ENCODE measurements at regions of chrX and their contacts with region 1.

Region 1: DNA sequence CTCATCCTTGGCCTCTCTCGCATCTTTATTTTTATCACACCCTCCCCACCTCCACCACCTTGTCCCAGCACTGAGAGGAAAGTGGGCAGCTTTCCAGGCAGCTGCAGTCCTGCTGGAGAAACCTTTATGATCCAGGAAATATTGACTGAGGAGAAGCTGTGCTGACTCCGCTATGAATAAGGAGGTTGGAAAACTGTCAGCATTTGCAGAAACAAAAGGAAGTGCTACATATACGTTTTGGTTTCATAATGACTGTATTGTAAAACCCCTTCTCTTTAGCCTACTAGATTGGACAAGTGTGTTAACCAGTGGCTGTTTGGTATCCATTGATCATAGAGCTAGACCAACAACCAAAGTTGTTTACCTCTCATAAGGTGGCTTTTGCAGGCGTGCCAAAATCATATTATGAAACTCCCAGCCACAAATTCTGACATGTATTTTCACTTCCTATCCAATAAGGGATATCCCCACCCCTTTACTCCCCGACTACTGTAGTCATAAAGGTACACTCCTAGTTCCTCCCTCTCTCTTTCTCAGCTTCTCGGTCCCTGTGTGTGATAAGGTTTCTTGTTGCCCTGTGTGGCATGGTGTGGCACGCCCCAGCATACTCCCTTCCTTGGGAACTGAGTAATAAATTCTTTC is 88.4 kb downstream of the GPR143 start:
- DNase-seq: peak; percentile 51
- H3K4me3 Mint-ChIP-seq: no peak overlapping the region
- H3K27ac Mint-ChIP-seq: peak overlapping the region; percentile 50
- H3K4me1 Mint-ChIP-seq: peaks cover 23% of the 10 kb centered on the region
- H3K27me3 Mint-ChIP-seq: no peaks in the 10 kb centered on the region

Region 2: DNA sequence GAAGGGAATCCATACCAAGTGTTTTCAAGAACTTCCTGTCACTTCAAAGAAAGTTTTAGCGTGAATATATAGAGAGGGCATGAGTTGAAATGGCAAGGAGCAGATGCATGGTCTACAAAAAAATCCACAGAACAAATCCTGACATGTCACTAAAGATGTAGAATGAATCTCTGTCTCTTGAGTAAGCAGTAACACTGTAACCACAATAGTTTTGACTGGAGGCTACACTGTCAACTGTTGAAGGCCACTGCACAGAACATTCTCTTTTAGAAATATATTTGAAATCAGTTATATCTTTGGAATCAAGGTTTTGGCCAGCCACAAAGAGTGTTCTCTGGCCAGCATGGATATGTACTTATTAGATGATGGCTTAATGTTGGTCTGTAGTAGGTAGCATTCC is 1128.8 kb before region 1 on chrX:
- CTCF ChIA-PET with region 1: no interaction called
- intact Hi-C with region 1: no loop called
- DNase-seq: no peak
- H3K4me3 Mint-ChIP-seq: no peak overlapping the region
- H3K27ac Mint-ChIP-seq: no peak overlapping the region
- H3K4me1 Mint-ChIP-seq: no peaks in the 10 kb centered on the region
- H3K27me3 Mint-ChIP-seq: no peaks in the 10 kb centered on the region

Region 3: DNA sequence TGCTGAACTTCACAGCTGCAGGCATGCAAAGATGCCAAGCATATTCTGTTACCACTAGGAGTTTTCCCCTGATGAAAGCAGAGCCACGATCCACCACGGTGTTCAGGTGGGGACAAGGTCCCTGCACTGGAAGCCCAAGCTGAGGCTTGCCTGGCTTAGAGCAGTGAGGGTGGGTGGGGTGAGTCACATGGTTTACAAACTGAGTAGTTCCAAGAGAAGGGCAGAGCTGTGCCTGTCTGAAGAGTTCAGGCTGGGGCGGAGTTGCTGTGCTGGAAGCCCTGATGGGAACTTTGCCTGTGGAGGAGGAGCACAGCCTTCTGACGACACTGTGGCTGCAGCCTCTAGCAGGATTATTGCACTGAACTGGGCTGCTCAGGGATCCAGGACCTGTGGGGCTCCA is 688.8 kb before region 1 on chrX:
- CTCF ChIA-PET with region 1: no interaction called
- intact Hi-C with region 1: no loop called
- DNase-seq: peak; percentile 40
- H3K4me3 Mint-ChIP-seq: no peak overlapping the region
- H3K27ac Mint-ChIP-seq: no peak overlapping the region
- H3K4me1 Mint-ChIP-seq: peaks cover 24% of the 10 kb centered on the region
- H3K27me3 Mint-ChIP-seq: no peaks in the 10 kb centered on the region

Region 4: DNA sequence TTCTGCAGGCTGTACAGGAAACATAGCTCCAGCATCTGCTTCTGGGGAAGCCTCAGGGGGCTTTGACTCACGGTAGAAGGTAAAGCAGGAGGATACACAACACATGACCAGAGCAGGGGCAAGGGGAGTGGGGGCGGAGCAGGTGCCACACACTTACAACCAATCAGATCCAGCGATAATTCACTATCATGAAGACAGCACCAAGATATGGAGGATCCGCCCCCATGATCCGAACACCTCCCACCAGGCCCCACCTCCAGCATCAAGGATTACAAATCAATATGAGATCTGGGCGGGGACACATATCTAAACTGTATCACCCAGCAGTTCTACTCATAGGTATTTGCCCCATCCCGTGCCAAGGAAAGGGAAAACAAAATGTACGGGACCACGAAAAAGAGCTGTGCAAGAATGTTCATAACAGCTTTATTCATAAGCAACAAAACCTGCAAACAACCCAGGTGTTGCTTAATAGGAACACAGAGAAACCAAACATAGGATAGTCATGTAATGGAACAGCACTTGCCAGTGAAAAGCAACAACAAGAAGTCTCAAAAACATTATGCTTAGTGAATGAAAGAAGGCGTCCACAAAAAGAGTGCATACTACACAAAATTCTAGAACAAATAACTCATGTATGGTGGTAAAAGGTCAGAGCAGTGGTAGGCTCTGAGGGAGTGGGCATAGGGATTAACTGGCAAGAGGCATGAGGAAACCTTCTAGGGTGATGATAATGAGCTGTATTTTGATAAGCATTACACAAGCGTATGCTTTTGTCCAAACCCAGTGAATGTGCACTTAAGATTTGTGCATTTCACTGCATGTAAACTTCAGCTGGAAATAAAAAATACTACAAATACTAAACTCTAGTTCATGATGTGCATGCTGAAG is 512.4 kb before region 1 on chrX:
- CTCF ChIA-PET with region 1: no interaction called
- intact Hi-C with region 1: loop called (anchors 5 kb)
- DNase-seq: no peak
- H3K4me3 Mint-ChIP-seq: no peak overlapping the region
- H3K27ac Mint-ChIP-seq: no peak overlapping the region
- H3K4me1 Mint-ChIP-seq: peaks cover 41% of the 10 kb centered on the region
- H3K27me3 Mint-ChIP-seq: no peaks in the 10 kb centered on the region

Region 5: GRCh38 chrX:9352694-9353411 is 324.4 kb before region 1 on chrX:
- CTCF ChIA-PET with region 1: no interaction called
- intact Hi-C with region 1: loop called (anchors 1 kb)
- DNase-seq: peak; percentile 58
- H3K4me3 Mint-ChIP-seq: no peak overlapping the region
- H3K27ac Mint-ChIP-seq: peak overlapping the region; percentile 4
- H3K4me1 Mint-ChIP-seq: peaks cover 29% of the 10 kb centered on the region
- H3K27me3 Mint-ChIP-seq: no peaks in the 10 kb centered on the region

Region 6: GRCh38 chrX:9464435-9465371 is 212.5 kb before region 1 on chrX and contains the start of gene TBL1X:
- CTCF ChIA-PET with region 1: no interaction called
- intact Hi-C with region 1: loop called (anchors 1 kb)
- DNase-seq: peak; percentile 29
- H3K4me3 Mint-ChIP-seq: peak within 1 kb of the TSS; percentile 74
- H3K27ac Mint-ChIP-seq: peak within 1 kb of the TSS; percentile 82
- H3K4me1 Mint-ChIP-seq: peaks cover 40% of the 10 kb centered on the region
- H3K27me3 Mint-ChIP-seq: no peaks in the 10 kb centered on the region
- total RNA-seq, gene TBL1X: 20.7 to 21.6 TPM

Region 7: DNA sequence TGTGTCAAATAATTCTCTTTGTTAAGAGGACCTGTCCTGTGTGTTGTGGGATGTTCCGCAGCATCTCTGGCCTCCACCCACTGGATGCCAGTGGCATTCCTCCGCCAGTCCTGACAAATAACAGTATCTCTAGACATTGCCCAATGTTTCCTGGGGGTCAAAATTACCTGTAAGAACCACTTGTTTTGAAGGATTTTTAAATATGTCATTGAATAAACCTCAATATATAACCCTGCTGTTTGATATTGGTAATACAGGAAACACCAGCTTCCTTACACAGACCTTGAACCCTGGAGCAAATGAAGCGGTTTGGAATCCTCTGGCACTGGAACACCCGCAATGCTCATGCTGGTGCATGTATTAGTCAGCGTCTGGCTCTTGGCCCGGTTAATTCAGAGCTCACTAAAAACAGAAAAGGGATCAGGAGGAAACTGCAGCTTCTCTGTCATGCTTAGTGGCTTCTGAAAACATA is 111.0 kb before region 1 on chrX:
- CTCF ChIA-PET with region 1: no interaction called
- intact Hi-C with region 1: loop called (anchors 1 kb)
- DNase-seq: peak; percentile 41
- H3K4me3 Mint-ChIP-seq: no peak overlapping the region
- H3K27ac Mint-ChIP-seq: no peak overlapping the region
- H3K4me1 Mint-ChIP-seq: peaks cover 19% of the 10 kb centered on the region
- H3K27me3 Mint-ChIP-seq: no peaks in the 10 kb centered on the region

Region 8: DNA sequence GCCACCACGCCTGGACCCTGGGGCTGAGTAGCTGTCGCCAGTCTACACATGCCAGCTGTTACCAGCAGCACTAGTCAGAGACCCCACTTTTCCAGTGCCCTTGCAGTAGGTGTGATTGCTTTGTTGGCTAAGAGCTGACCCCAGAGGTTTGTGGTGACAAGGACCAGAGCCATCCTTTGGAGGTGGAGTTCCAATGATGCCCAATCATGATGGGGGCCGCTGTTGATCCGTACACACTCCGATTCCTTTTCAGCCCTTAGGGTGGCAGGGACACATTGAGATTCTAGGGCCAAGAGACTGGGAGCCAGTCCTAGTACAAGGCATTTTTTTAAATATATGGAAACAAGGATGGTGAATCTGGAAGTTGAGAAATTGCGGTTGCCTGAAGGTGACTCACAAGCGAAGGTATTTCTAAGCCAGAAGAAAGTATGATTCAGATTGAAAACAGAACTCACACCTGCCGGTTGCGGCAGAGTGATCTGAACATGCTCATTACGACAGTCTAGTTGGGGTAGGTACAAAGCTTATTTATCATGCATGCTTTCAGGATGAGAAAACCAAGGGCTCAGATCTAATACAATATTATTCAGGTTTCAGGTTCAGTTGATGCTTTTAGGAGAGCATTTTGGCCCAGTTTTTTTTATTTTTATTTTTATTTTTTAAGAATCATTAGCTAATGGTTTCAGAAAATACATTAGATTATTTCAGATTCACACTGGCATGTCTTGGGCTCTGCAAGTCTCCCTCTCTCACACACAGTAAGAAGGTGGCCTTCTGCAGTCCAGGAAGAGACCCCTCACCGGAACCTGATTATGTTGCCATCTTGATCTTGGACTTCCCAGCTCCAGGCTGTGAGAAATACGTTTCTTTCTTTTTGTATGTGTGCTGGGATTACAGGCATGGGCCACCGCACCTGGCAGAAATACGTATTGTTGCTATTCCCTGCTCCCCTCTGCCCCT is 152.4 kb after region 1 on chrX:
- CTCF ChIA-PET with region 1: no interaction called
- intact Hi-C with region 1: no loop called
- DNase-seq: peak; percentile 71
- H3K4me3 Mint-ChIP-seq: no peak overlapping the region
- H3K27ac Mint-ChIP-seq: no peak overlapping the region
- H3K4me1 Mint-ChIP-seq: peaks cover 4% of the 10 kb centered on the region
- H3K27me3 Mint-ChIP-seq: peaks cover 13% of the 10 kb centered on the region

Region 9: DNA sequence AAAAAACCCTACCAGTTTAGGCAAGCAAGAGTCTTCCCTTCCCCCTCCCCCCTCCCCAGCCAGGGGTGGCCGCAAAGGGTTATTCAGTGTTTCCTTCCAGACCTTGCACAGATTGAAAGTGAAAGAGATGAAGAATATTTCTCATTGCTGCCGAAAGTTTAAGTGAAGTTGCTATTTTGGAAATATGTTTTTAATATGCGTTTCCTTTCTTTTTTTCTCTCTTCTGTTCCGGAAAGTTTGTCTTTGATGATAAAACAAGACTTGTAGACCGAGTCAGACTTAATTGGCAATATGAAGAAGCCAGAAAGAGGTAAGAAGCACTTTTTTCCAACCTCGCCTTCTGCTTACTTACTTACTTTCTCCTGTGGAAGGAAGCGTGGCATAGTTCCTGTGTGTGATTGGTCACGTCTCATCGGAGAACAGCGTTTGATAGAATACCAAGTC is 421.1 kb after region 1 on chrX:
- CTCF ChIA-PET with region 1: no interaction called
- intact Hi-C with region 1: loop called (anchors 2 kb)
- DNase-seq: peak; percentile 80
- H3K4me3 Mint-ChIP-seq: peak overlapping the region; percentile 69
- H3K27ac Mint-ChIP-seq: peak overlapping the region; percentile 83
- H3K4me1 Mint-ChIP-seq: peaks cover 51% of the 10 kb centered on the region
- H3K27me3 Mint-ChIP-seq: no peaks in the 10 kb centered on the region

Measured in activated naive CD4-positive, alpha-beta T cell treated with anti-CD3 and anti-CD28 coated beads for 36 hours (primary cell).